ENCODE measurements at regions of chr2 and their contacts with region 1.

Region 1: DNA sequence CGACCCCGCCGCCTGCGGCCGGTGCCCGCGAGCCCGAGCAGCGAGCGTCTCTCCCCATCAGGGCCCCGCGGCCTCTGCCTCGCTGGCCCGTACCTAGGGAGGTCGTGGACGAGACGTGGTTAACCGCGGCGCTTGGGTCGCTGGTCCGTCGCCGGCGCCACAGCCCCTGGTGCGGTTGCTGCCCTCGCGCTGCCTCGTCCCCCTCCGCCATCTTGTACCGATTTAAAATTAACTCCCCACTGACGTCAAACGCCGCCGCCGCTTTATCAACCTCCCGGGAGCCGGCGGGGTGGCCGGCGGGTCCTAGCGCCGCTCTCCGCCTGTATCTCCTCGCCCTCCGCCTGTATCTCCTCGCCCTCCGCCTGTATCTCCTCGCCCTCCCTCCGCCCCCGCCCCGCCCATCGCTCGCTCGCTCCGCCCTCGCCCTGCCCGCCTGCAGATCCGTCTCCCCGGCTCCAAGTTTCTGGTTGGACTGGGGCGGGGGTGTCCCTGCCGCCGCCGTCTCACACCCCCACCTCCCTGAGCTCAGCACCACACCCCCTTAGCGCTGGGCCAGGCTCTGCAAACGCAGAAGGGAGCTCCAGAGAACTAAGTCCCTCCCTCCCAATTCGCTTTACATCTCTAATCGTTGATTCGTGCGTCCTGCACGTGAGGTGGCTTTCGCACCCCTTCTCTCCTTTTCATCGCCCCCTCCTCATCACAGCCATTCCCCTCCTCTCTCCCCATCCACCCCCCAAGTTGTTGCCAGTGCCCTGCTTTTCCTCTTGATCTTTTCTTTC is at the start of gene ATL2:
- DNase-seq: peak; percentile 94
- H3K4me3 Mint-ChIP-seq: peak within 1 kb of the TSS; percentile 87
- H3K27ac Mint-ChIP-seq: peak within 1 kb of the TSS; percentile 92
- H3K4me1 Mint-ChIP-seq: peaks cover 56% of the 10 kb centered on the region
- H3K27me3 Mint-ChIP-seq: no peaks in the 10 kb centered on the region
- total RNA-seq, gene ATL2: 57.1 and 57.7 TPM in 2 replicates

Region 2: DNA sequence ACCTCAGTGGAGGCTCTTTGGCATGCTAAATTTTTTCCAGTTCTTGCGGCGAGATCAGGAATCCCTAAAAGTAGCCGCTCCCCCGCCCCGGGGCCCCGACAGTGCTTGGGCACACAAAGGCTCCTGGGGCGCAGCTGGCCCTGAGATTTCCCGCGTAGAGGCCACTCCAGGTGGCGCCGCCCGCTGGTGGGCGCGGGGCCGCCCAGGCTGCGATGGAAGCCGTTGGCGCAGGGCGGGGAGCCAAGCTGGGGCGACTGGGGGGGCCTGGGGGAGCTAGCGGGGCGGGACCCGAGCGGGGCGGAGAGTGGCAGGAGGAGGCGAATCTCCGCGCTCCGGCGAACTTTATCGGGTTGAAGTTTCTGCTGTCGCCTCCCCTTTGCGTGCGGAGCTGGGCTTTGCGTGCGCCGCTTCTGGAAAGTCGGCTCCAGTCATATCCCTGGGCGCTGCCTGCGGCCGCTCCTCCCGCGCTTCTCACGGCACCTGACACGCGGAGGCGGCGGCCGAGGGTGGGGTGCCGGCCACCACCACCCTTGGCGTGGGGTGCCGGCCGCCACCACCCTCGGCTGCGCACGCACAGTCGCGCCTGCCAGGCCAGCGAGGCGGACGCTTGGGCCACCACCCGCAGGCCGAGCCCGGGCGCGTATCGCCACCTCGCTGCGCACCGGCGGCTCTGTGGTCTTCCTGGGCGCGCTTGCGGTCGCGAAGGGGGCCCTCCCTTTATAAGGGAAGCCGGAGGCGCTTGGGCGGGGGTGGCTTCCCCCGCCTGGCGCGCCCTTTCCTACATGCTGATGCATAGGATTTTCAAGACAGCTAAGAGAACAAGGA is 300.4 kb before region 1 on chr2:
- intact Hi-C with region 1: loop called (anchors 5 kb)
- DNase-seq: peak; percentile 81
- H3K4me3 Mint-ChIP-seq: peak overlapping the region; percentile 84
- H3K27ac Mint-ChIP-seq: peak overlapping the region; percentile 85
- H3K4me1 Mint-ChIP-seq: peaks cover 45% of the 10 kb centered on the region
- H3K27me3 Mint-ChIP-seq: peaks cover 43% of the 10 kb centered on the region

Region 3: GRCh38 chr2:38387887-38388286 is 10.6 kb after region 1 on chr2:
- intact Hi-C with region 1: loop called (anchors 1 kb)
- DNase-seq: peak; percentile 28
- H3K4me3 Mint-ChIP-seq: peak overlapping the region; percentile 19
- H3K27ac Mint-ChIP-seq: peak overlapping the region; percentile 47
- H3K4me1 Mint-ChIP-seq: peaks cover 24% of the 10 kb centered on the region
- H3K27me3 Mint-ChIP-seq: peaks cover 11% of the 10 kb centered on the region

Region 4: GRCh38 chr2:38462109-38462759 is 85.0 kb after region 1 on chr2:
- intact Hi-C with region 1: loop called (anchors 1 kb)
- DNase-seq: no peak
- H3K4me3 Mint-ChIP-seq: no peak overlapping the region
- H3K27ac Mint-ChIP-seq: peak overlapping the region; percentile 9
- H3K4me1 Mint-ChIP-seq: peaks cover 9% of the 10 kb centered on the region
- H3K27me3 Mint-ChIP-seq: peaks cover 23% of the 10 kb centered on the region

Region 5: DNA sequence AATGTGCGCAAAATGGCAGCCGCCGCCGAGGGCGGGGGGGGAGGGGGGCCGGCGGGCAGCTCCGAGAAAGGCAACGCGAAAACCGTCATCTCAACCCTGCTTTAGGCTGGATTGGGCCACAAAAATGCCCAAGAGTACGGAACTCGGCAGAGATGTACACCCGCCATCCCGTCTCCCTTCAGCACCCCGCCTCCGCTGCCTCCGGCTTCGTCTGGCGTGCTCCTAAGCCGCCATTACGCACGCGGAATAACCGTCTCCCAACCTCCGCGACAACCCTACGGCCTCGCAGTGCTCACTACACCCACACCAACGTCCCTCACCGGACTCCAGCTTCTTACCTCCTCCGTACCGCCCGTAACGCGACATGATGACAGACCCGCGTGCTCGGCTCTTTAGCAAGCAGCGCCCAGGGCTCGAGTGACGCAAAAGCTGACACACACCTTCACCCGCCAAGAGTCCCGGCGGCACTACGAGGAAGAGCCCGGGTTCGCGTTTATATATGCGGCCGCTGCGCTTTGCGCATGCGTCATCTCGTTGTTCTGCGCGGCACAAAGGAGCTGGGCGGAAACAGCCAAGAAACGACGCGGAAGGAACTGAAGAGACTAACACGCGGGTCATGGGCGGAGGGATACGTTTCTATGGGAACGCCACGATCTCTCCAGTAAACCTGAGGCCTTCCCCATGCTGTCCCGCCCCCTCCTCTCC is 373.8 kb after region 1 on chr2 and contains the start of gene SRSF7:
- intact Hi-C with region 1: loop called (anchors 2 kb)
- DNase-seq: peak; percentile 97
- H3K4me3 Mint-ChIP-seq: peak within 1 kb of the TSS; percentile 98
- H3K27ac Mint-ChIP-seq: peak within 1 kb of the TSS; percentile 100
- H3K4me1 Mint-ChIP-seq: peaks cover 53% of the 10 kb centered on the region
- H3K27me3 Mint-ChIP-seq: no peaks in the 10 kb centered on the region
- total RNA-seq, gene SRSF7: 401 and 406 TPM in 2 replicates

Measured in activated T-helper 2 cell treated with anti-CD3 and anti-CD28 coated beads, Interferon-gamma antibody, Interleukin-2, Interleukin-4, amounts not matched to agents 10 μg/mL and 5 μg/mL and 100 μg/mL, durations not matched to agents 14 hours and 24 hours and 36 hours (primary cell).